Heart left ventricle (tissue), 16 donors: ENCODE measurements at regions of chr6 and their contacts with region 1.

Region 1: GRCh38 chr6:111478749-111479148 is 4.3 kb downstream of the REV3L start:
- DNase-seq: no peak
- ATAC-seq: peak in 1 of 4 donors; percentile 15
- H3K4me3 ChIP-seq: no peak overlapping the region
- H3K27ac ChIP-seq: peak overlapping the region in 2 of 12 donors; percentile 4 to 38
- H3K4me1 ChIP-seq: peaks cover 0 to 55% (median 35%) of the 10 kb centered on the region in 12 donors
- H3K27me3 ChIP-seq: no peaks in the 10 kb centered on the region
- CTCF ChIP-seq: peak in 9 of 12 donors; percentile 9 to 56 (median 35)
- POLR2A ChIP-seq: no peak

Region 2: DNA sequence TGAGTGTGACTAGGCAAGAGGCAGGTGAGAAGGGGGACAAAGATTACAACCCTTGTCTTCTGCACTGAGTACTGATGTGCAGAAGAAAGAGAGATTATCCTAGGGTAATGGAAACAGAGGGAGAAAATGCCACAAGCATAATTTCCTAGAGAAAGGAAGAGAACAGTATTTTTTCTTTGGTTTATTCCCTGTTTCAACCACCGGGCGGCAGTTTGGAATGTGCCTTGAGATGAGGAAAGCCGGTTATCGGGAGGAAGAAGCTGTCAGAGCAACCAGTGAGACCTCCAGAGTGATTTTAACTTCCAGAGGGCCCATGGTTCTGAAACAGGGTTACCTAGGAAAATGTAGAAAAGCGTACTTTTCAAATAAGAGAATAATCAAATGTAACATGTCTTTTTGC is 117.1 kb before region 1 on chr6:
- intact Hi-C with region 1: loop called in 2 of 10 experiments (anchors 5 to 10 kb)
- DNase-seq: peak in 1 of 5 donors; percentile 22
- ATAC-seq: peak in 1 of 4 donors; percentile 69
- H3K4me3 ChIP-seq: no peak overlapping the region
- H3K27ac ChIP-seq: no peak overlapping the region
- H3K4me1 ChIP-seq: peaks cover 0 to 8% (median 0%) of the 10 kb centered on the region in 12 donors
- H3K27me3 ChIP-seq: no peaks in the 10 kb centered on the region
- CTCF ChIP-seq: peak in 10 of 12 donors; percentile 21 to 61 (median 47)
- POLR2A ChIP-seq: no peak

Region 3: GRCh38 chr6:111382476-111383300 is 96.1 kb before region 1 on chr6:
- intact Hi-C with region 1: loop called in 1 of 10 experiments (anchors 10 kb)
- DNase-seq: peak in 4 of 5 donors; percentile 13 to 56 (median 40)
- ATAC-seq: peak; percentile 62 to 84 (median 75)
- H3K4me3 ChIP-seq: no peak overlapping the region
- H3K27ac ChIP-seq: peak overlapping the region in 3 of 12 donors; percentile 28 to 33 (median 32)
- H3K4me1 ChIP-seq: peaks cover 0 to 8% (median 0%) of the 10 kb centered on the region in 12 donors
- H3K27me3 ChIP-seq: no peaks in the 10 kb centered on the region
- CTCF ChIP-seq: no peak
- POLR2A ChIP-seq: no peak

Region 4: DNA sequence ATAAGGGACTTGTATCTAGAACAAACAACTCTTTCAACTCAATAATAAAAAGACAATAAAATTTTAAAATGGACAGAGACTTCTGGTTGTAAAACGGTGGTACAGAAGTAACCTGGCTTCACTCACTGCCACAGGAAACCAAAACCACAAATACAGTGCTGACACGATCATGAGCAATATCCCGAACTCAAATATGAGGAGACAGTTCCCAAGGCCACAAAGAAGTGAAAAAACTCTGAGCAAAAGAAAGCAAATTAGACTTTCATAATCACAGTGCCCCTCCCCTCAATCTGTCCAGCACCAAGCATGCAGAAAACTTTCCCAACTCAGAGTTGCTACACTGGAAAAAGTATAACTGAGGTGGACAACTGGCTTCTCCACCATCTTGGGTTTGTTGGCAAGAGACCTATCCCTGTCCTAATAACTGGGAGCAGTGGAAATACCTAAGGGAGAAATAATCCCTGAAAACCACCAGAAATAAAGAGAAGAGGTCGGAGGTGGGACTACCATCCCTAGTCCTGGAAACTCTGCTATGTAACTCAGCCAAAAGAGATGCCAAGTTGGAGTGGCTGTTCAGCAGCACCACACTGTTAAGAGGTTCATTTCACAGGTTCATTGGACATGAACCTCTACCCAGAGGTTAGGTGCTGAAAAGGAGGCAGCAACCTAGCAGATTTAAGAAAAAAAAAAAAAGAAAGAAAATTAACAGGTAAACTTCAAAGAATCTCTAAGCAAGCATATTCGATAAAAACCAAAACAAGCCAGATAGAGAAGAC is 51.2 kb before region 1 on chr6:
- intact Hi-C with region 1: loop called in 1 of 10 experiments (anchors 10 kb)
- DNase-seq: no peak
- ATAC-seq: peak in 2 of 4 donors; percentile 38 to 44
- H3K4me3 ChIP-seq: no peak overlapping the region
- H3K27ac ChIP-seq: peak overlapping the region in 1 of 12 donors; percentile 61
- H3K4me1 ChIP-seq: peaks cover 0 to 53% (median 24%) of the 10 kb centered on the region in 12 donors
- H3K27me3 ChIP-seq: no peaks in the 10 kb centered on the region
- CTCF ChIP-seq: no peak
- POLR2A ChIP-seq: no peak